ENCODE measurements at regions of chr17 and their contacts with region 1.

Region 1: GRCh38 chr17:50094753-50095619 is at the start of gene PDK2:
- H3K4me3 Mint-ChIP-seq: peak within 1 kb of the TSS; percentile 93
- H3K27ac Mint-ChIP-seq: peak within 1 kb of the TSS; percentile 93
- H3K4me1 Mint-ChIP-seq: peaks cover 43% of the 10 kb centered on the region
- H3K27me3 Mint-ChIP-seq: peaks cover 10% of the 10 kb centered on the region

Region 2: DNA sequence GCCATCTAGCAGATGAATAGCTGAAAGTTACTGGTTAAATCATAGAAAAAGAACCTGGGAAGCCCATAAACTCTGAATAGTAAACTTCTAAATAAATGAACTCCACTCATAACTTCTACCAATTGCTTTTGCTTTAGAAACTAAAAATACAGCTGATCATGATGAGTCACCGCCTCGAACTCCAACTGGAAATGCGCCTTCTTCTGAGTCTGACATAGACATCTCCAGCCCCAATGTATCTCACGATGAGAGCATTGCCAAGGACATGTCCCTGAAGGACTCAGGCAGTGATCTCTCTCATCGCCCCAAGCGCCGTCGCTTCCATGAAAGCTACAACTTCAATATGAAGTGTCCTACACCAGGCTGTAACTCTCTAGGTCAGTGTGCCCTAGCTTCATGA is 296.8 kb before region 1 on chr17:
- intact Hi-C with region 1: no loop called
- H3K4me3 Mint-ChIP-seq: no peak overlapping the region
- H3K27ac Mint-ChIP-seq: no peak overlapping the region
- H3K4me1 Mint-ChIP-seq: peaks cover 5% of the 10 kb centered on the region
- H3K27me3 Mint-ChIP-seq: no peaks in the 10 kb centered on the region

Region 3: DNA sequence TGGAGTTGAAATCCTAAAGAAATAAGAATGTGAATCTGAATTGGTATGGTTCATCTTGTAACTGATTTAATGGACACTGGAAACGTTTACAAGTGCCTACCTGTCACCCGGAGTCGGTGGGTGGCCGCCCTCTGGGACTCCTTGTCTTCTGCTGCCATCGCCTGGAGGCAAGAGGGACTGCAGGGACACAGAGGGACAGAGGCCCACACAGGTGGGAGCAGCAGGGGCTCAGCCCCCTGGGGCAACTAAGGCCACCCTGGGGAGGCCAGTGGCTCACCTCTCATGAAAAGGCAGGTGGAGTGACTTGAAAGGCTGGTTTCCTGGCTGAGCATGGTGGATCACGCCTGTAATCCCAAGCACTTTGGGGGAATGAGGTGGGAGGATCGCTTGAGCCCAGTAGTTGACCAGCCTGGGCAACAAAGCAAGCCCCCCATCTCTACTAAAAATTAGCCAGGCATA is 202.4 kb after region 1 on chr17:
- intact Hi-C with region 1: loop called (anchors 10 kb)
- H3K4me3 Mint-ChIP-seq: no peak overlapping the region
- H3K27ac Mint-ChIP-seq: no peak overlapping the region
- H3K4me1 Mint-ChIP-seq: peaks cover 10% of the 10 kb centered on the region
- H3K27me3 Mint-ChIP-seq: peaks cover 4% of the 10 kb centered on the region